Naive thymus-derived CD4-positive, alpha-beta T cell (primary cell): ENCODE measurements at regions of chr4 and their contacts with region 1.

Region 1: DNA sequence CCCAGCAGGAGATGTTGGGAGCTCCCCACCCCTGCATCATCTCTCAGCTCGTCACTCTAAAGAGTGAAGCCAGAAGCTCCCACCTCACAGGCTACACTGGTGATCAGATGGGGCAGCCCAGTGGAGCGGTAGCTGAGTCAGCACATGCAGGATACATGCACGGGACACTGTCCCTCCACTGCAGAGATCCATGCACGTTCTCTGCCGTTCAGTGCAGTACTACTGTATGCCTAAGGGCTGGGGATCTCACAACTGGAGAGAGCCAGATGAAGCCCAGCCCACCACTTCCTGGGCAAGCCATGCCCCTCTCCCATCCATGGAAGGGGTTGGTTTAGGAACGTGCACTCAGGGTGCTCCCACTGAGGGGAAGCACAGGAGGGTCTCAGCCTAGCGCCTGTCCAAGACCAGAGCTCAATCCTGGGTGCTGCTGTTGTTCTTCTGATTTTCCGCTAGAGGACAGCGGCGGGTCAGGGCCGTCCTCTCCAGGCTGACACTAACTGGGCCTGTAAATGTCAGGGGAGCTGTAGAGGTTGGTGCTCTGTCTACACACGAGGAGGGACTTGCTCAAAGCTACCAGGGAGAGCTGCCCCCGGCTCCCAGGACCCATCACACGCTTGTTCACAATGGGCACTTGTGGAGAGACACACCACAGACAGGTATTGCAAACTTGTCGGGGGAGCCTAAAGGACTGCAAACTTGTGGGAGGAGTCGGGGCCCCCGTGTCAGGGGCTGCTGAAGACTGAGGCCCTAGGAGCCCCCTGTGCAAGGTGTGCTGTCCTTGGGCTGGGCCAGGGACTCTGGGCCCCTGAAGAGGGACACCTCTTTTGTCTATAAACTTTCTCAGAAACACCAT is 18.2 kb upstream of the ABLIM2 start:
- DNase-seq: peak in 7 of 9 donors; percentile 37 to 60 (median 54)
- ATAC-seq: peak; percentile 89
- H3K4me3 ChIP-seq: no peak overlapping the region
- H3K4me3 Mint-ChIP-seq: no peak overlapping the region
- H3K27ac ChIP-seq: no peak overlapping the region
- H3K27ac Mint-ChIP-seq: peak overlapping the region in 2 of 9 donors; percentile 48 to 49
- H3K4me1 ChIP-seq: no peaks in the 10 kb centered on the region
- H3K4me1 Mint-ChIP-seq: peaks cover 0 to 5% (median 0%) of the 10 kb centered on the region in 7 donors
- H3K27me3 ChIP-seq: no peaks in the 10 kb centered on the region
- H3K27me3 Mint-ChIP-seq: peaks cover 0 to under 1% (median 0%) of the 10 kb centered on the region in 5 donors

Region 2: DNA sequence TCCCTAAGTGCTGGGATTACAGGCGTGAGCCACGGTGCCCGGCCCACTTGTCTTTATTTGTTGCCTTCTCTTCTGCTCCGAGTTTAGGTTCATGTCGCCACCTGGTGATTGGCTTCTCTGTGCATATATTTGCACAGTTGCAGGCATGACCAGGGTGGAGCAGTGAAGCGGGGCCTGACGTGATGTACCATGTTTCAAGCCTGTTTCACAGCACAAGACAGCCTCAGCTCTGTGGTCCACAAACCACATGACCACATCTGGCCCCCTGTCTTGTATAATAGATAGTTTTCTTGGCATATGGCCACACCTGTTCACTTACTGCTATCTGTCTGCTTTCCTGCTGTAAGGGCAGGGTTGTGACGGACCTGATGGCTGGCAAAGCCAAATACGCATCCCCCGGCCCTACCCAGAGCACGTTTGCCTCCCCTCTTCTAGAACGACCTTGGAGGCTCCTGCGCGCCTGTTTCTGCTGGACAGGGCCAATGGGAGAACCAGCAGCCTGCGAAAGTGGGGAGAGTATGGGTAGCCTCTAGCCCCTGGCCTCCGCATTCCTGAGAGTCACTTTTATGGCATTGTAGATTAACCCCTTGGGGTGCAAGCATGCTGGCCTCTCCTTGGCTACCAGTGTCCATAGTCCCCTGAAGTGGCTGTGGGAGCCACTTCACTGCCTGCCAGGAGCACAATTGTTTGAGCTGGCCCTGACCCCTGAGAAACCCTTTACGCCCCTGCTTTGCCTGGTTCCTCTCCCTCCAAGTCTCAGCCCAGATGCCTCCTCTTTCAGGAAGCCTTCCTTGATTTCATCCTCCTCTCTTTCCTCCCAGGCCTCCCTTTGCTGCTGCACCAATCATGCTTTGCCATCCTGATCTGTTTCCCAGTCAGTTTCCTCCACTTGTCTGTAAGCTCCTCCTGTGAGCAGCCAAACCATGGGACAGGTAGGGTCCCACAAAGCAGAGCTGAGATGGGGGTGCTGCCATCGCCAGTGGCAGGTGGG is 16.3 kb after region 1 on chr4:
- CTCF ChIA-PET with region 1: interaction called, 5 read pairs
- POLR2A ChIA-PET with region 1: no interaction called
- intact Hi-C with region 1: loop called (anchors 1 kb)
- DNase-seq: peak in 5 of 9 donors; percentile 22 to 34 (median 30)
- ATAC-seq: peak; percentile 69
- H3K4me3 ChIP-seq: no peak overlapping the region
- H3K4me3 Mint-ChIP-seq: no peak overlapping the region
- H3K27ac ChIP-seq: no peak overlapping the region
- H3K27ac Mint-ChIP-seq: peak overlapping the region in 3 of 9 donors; percentile 9 to 46 (median 25)
- H3K4me1 ChIP-seq: no peaks in the 10 kb centered on the region
- H3K4me1 Mint-ChIP-seq: peaks cover 2 to 18% (median 8%) of the 10 kb centered on the region in 7 donors
- H3K27me3 ChIP-seq: no peaks in the 10 kb centered on the region
- H3K27me3 Mint-ChIP-seq: peaks cover 0 to 3% (median 0%) of the 10 kb centered on the region in 5 donors

Region 3: GRCh38 chr4:8205749-8206611 is 29.2 kb after region 1 on chr4:
- CTCF ChIA-PET with region 1: no interaction called
- POLR2A ChIA-PET with region 1: no interaction called
- intact Hi-C with region 1: no loop called
- DNase-seq: no peak
- ATAC-seq: peak; percentile 29
- H3K4me3 ChIP-seq: no peak overlapping the region
- H3K4me3 Mint-ChIP-seq: no peak overlapping the region
- H3K27ac ChIP-seq: no peak overlapping the region
- H3K27ac Mint-ChIP-seq: peak overlapping the region in 3 of 9 donors; percentile 12 to 51 (median 43)
- H3K4me1 ChIP-seq: peaks cover 5 to 14% of the 10 kb centered on the region in 2 donors
- H3K4me1 Mint-ChIP-seq: peaks cover 13 to 42% (median 29%) of the 10 kb centered on the region in 7 donors
- H3K27me3 ChIP-seq: no peaks in the 10 kb centered on the region
- H3K27me3 Mint-ChIP-seq: no peaks in the 10 kb centered on the region

Region 4: GRCh38 chr4:8403173-8403753 is 226.5 kb after region 1 on chr4:
- CTCF ChIA-PET with region 1: interaction called, 15 read pairs
- POLR2A ChIA-PET with region 1: no interaction called
- intact Hi-C with region 1: loop called in 1 of 2 experiments (anchors 1 kb)
- DNase-seq: peak in 7 of 9 donors; percentile 17 to 52 (median 33)
- ATAC-seq: peak; percentile 81
- H3K4me3 ChIP-seq: no peak overlapping the region
- H3K4me3 Mint-ChIP-seq: no peak overlapping the region
- H3K27ac ChIP-seq: no peak overlapping the region
- H3K27ac Mint-ChIP-seq: no peak overlapping the region
- H3K4me1 ChIP-seq: no peaks in the 10 kb centered on the region
- H3K4me1 Mint-ChIP-seq: peaks cover 0 to 2% (median 0%) of the 10 kb centered on the region in 7 donors
- H3K27me3 ChIP-seq: no peaks in the 10 kb centered on the region
- H3K27me3 Mint-ChIP-seq: no peaks in the 10 kb centered on the region

Region 5: GRCh38 chr4:8727546-8728510 is 551.1 kb after region 1 on chr4:
- CTCF ChIA-PET with region 1: no interaction called
- POLR2A ChIA-PET with region 1: no interaction called
- intact Hi-C with region 1: no loop called
- DNase-seq: no peak
- ATAC-seq: no peak
- H3K4me3 ChIP-seq: no peak overlapping the region
- H3K4me3 Mint-ChIP-seq: no peak overlapping the region
- H3K27ac ChIP-seq: no peak overlapping the region
- H3K27ac Mint-ChIP-seq: no peak overlapping the region
- H3K4me1 ChIP-seq: no peaks in the 10 kb centered on the region
- H3K4me1 Mint-ChIP-seq: peaks cover 0 to 5% (median 0%) of the 10 kb centered on the region in 7 donors
- H3K27me3 ChIP-seq: no peaks in the 10 kb centered on the region
- H3K27me3 Mint-ChIP-seq: peaks cover 0 to 26% (median 0%) of the 10 kb centered on the region in 5 donors